ENCODE measurements at regions of chr19 and their contacts with region 1.

Region 1: DNA sequence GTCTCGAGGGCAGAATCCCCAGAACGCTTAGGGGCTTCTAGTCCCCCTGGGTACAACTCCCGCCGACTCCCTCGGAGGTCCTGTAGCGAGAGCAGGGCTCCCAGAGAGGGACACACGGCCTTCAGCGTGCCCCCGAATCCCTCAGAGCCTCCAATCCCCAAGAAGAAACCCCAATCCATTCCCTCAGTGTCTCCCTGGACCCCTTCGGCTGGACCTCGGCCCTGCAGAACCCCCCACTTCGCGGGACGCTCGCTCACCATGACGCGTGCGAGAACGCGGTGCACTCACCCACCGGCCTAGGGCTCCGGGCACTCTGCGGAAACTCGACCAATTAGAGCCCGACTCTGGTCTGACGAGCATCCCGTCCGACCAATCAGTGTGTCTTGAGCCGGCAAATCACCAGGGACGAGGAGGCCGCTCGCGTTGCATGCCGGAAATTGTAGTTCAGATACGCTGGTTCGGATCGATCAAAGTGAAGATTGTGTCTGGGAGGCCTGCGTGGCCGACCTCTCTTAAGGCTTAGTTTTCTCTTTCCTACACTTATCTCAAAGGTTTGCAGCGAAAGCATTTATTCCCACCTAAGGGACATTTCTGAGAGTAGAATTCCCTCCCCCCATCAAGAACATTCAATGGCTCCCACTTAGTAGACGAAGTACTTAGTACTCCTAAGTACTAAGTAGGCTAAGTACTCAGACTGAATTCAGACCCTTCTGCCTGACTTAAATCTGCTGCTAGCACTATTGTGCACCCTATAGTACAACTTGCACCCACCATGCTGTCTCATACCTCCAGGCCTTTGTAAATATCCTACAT is at the start of gene TMEM161A:
- DNase-seq: peak; percentile 94 to 98
- H3K4me3 ChIP-seq: peak within 1 kb of the TSS; percentile 56 to 77
- H3K27ac ChIP-seq: no peak within 1 kb of the TSS
- H3K4me1 ChIP-seq: peaks cover 0 to 8% of the 10 kb centered on the region in 2 donors
- H3K27me3 ChIP-seq: no peaks in the 10 kb centered on the region
- CTCF ChIP-seq: no peak
- total RNA-seq, gene TMEM161A: 14.5 TPM

Region 2: DNA sequence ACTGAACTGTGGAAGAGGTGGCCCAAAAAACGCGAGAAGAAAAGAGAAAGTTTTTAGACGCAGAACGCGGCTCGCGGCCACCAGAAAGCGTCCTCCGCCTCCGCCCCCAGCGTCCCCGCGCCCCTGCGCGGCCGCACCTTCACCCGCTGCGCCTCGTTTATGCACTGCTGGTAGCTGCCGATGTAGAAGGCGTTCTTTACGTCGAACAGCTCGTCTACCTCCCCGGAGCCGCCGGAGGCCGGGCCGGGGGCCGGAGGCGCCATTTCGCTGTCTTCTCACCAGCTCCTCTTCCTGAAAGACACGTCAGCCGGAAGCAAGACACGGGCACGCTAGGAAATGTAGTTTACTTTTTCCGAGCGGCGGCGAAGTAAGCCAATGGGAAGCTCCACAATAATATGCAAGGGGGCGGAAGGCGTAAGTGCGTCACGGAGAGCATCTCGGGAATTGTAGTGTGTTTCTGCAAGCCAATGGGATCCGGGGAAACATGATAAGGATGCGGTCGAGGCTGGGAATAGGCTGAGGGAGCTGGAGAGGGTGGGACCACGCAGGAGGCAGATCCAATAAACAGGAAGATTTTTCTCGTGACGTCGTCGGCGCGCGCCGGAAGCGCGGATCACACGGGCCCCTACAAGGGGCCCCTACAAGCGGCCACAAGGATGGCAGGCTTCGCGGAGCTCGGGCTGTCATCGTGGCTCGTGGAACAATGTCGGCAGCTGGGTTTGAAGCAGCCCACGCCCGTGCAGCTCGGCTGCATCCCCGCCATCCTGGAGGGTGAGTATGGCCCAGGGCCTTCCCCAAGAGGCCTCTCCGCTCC is 219.1 kb before region 1 on chr19 and contains the starts of genes COPE and DDX49:
- intact Hi-C with region 1: loop called (anchors 10 kb)
- DNase-seq: peak; percentile 98 to 100
- H3K4me3 ChIP-seq: peak within 1 kb of the TSS; percentile 88 to 98
- H3K27ac ChIP-seq: peak within 1 kb of the TSS; percentile 91 to 97
- H3K4me1 ChIP-seq: peaks cover 6 to 22% of the 10 kb centered on the region in 2 donors
- H3K27me3 ChIP-seq: no peaks in the 10 kb centered on the region
- CTCF ChIP-seq: no peak
- total RNA-seq, gene COPE: 331 TPM
- total RNA-seq, gene DDX49: 51.6 TPM

Region 3: GRCh38 chr19:19053508-19054314 is 84.7 kb before region 1 on chr19:
- intact Hi-C with region 1: loop called (anchors 2 kb)
- DNase-seq: no peak
- H3K4me3 ChIP-seq: no peak overlapping the region
- H3K27ac ChIP-seq: no peak overlapping the region
- H3K4me1 ChIP-seq: no peaks in the 10 kb centered on the region
- H3K27me3 ChIP-seq: no peaks in the 10 kb centered on the region
- CTCF ChIP-seq: peak; percentile 35 to 61 (median 58)

Region 4: GRCh38 chr19:19063183-19064097 is 74.9 kb before region 1 on chr19 and contains the start of gene SLC25A42:
- intact Hi-C with region 1: loop called (anchors 1 kb)
- DNase-seq: peak; percentile 99 to 100
- H3K4me3 ChIP-seq: peak within 1 kb of the TSS; percentile 81 to 95
- H3K27ac ChIP-seq: peak within 1 kb of the TSS; percentile 62 to 78
- H3K4me1 ChIP-seq: peaks cover 0 to 21% of the 10 kb centered on the region in 2 donors
- H3K27me3 ChIP-seq: no peaks in the 10 kb centered on the region
- CTCF ChIP-seq: no peak
- total RNA-seq, gene SLC25A42: 8.9 TPM